Activated naive CD4-positive, alpha-beta T cell treated with anti-CD3 and anti-CD28 coated beads for 36 hours (primary cell): ENCODE measurements at regions of chr22 and their contacts with region 1.

Region 1: GRCh38 chr22:41857155-41857859 is 24.4 kb downstream of the SREBF2 start:
- DNase-seq: peak; percentile 93
- H3K4me3 Mint-ChIP-seq: peak overlapping the region; percentile 11
- H3K27ac Mint-ChIP-seq: peak overlapping the region; percentile 95
- H3K4me1 Mint-ChIP-seq: peaks cover 77% of the 10 kb centered on the region
- H3K27me3 Mint-ChIP-seq: no peaks in the 10 kb centered on the region

Region 2: GRCh38 chr22:41688365-41689211 is 168.7 kb before region 1 on chr22 and contains the start of gene SNU13:
- CTCF ChIA-PET with region 1: no interaction called
- intact Hi-C with region 1: no loop called
- DNase-seq: peak; percentile 96
- H3K4me3 Mint-ChIP-seq: peak within 1 kb of the TSS; percentile 97
- H3K27ac Mint-ChIP-seq: peak within 1 kb of the TSS; percentile 97
- H3K4me1 Mint-ChIP-seq: peaks cover 39% of the 10 kb centered on the region
- H3K27me3 Mint-ChIP-seq: no peaks in the 10 kb centered on the region
- total RNA-seq, gene SNU13: 265 to 277 TPM

Region 3: GRCh38 chr22:41780746-41781505 is 76.4 kb before region 1 on chr22:
- CTCF ChIA-PET with region 1: interaction called, 3 read pairs
- intact Hi-C with region 1: loop called (anchors 2 kb)
- DNase-seq: peak; percentile 98
- H3K4me3 Mint-ChIP-seq: peak overlapping the region; percentile 86
- H3K27ac Mint-ChIP-seq: peak overlapping the region; percentile 95
- H3K4me1 Mint-ChIP-seq: peaks cover 49% of the 10 kb centered on the region
- H3K27me3 Mint-ChIP-seq: no peaks in the 10 kb centered on the region

Region 4: GRCh38 chr22:41822317-41823060 is 34.8 kb before region 1 on chr22:
- CTCF ChIA-PET with region 1: interaction called, 5 read pairs
- intact Hi-C with region 1: loop called (anchors 1 kb)
- DNase-seq: peak; percentile 65
- H3K4me3 Mint-ChIP-seq: no peak overlapping the region
- H3K27ac Mint-ChIP-seq: peak overlapping the region; percentile 81
- H3K4me1 Mint-ChIP-seq: peaks cover 33% of the 10 kb centered on the region
- H3K27me3 Mint-ChIP-seq: no peaks in the 10 kb centered on the region

Region 5: GRCh38 chr22:41841085-41841659 is 16.1 kb before region 1 on chr22:
- CTCF ChIA-PET with region 1: interaction called, 26 read pairs
- intact Hi-C with region 1: loop called (anchors 1 kb)
- DNase-seq: no peak
- H3K4me3 Mint-ChIP-seq: no peak overlapping the region
- H3K27ac Mint-ChIP-seq: peak overlapping the region; percentile 57
- H3K4me1 Mint-ChIP-seq: peaks cover 82% of the 10 kb centered on the region
- H3K27me3 Mint-ChIP-seq: no peaks in the 10 kb centered on the region